ENCODE measurements at regions of chr7 and their contacts with region 1.

Region 1: DNA sequence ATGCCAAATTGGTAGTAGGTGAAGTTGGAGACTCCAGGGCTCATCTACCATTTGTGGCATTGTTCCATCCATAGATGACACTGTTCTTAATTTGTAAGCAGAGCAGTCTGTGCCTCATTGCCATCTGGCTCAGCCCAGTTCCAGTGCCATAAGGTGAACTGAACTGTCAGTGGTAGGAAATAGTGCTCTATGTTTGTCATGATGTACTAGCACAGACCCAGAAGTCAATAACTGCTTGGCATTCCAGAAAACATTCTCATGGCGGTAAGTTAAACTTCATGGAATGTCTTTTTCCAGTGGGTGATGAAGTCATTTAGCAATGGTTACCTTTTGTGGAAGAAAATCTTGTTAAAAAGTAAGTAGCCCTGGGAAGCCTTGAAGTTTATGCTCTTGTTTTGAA is 302.7 kb downstream of the SUGCT start:
- DNase-seq: no peak
- ATAC-seq: peak; percentile 77
- H3K4me3 ChIP-seq: no peak overlapping the region
- H3K27ac ChIP-seq: peak overlapping the region; percentile 81 to 99
- H3K4me1 ChIP-seq: peaks cover 3 to 4% of the 10 kb centered on the region in 2 donors
- H3K27me3 ChIP-seq: no peaks in the 10 kb centered on the region

Region 2: GRCh38 chr7:40403703-40404476 is 33.6 kb before region 1 on chr7:
- intact Hi-C with region 1: loop called in 1 of 2 experiments (anchors 5 kb)
- DNase-seq: no peak
- ATAC-seq: no peak
- H3K4me3 ChIP-seq: no peak overlapping the region
- H3K27ac ChIP-seq: no peak overlapping the region
- H3K4me1 ChIP-seq: peaks cover 0 to 2% of the 10 kb centered on the region in 2 donors
- H3K27me3 ChIP-seq: no peaks in the 10 kb centered on the region

Region 3: DNA sequence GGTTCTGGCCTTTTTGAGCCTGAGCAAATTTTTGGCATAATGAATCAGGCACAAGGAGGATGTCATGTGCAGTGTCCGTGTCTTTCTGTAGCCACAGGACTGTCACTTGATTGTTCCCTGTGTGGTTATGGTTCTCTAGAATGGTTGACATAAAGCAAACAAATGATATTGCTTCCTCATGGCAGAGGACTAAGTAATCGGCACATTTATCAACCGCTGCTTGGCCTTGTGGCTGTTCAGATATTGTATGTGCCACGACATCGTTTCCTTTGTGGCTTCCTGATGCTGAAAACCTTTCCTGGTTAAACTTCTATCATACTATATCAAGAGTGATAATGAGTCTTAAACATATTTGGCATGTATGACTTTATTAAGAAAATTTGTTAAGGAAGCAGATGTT is 296.1 kb after region 1 on chr7:
- intact Hi-C with region 1: loop called in 1 of 2 experiments (anchors 10 kb)
- DNase-seq: no peak
- ATAC-seq: no peak
- H3K4me3 ChIP-seq: no peak overlapping the region
- H3K27ac ChIP-seq: peak overlapping the region in 1 of 2 donors; percentile 33
- H3K4me1 ChIP-seq: peaks cover 1 to 7% of the 10 kb centered on the region in 2 donors
- H3K27me3 ChIP-seq: no peaks in the 10 kb centered on the region